ENCODE measurements at regions of chr4 and their contacts with region 1.

Region 1: GRCh38 chr4:101169044-101170014 is 178.0 kb downstream of the PPP3CA start:
- DNase-seq: peak in 3 of 4 experiments; percentile 5 to 38 (median 7)
- ATAC-seq: 0 out of 3 replicates have a peak, but pooled peaks have one; percentile 47
- H3K4me3 ChIP-seq: no peak overlapping the region
- H3K27ac ChIP-seq: no peak overlapping the region
- H3K4me1 ChIP-seq: no peaks in the 10 kb centered on the region
- H3K27me3 ChIP-seq: no peaks in the 10 kb centered on the region
- CTCF ChIP-seq: peak; percentile 8 to 31 (median 29); a peak in 1 of 6 replicates
- EP300 ChIP-seq: no peak
- POLR2A ChIP-seq: no peak
- RAD21 ChIP-seq: peak; percentile 79 to 91

Region 2: GRCh38 chr4:101730291-101731117 is 561.2 kb after region 1 on chr4:
- CTCF ChIA-PET with region 1: interaction called, 3 read pairs
- POLR2A ChIA-PET with region 1: no interaction called
- in situ Hi-C with region 1: no loop called
- intact Hi-C with region 1: loop called (anchors 5 kb)
- DNase-seq: peak; percentile 7 to 37 (median 14)
- ATAC-seq: peak; percentile 72
- H3K4me3 ChIP-seq: no peak overlapping the region
- H3K27ac ChIP-seq: no peak overlapping the region
- H3K4me1 ChIP-seq: no peaks in the 10 kb centered on the region
- H3K27me3 ChIP-seq: no peaks in the 10 kb centered on the region
- CTCF ChIP-seq: peak; percentile 23 to 30 (median 28); a peak in 2 of 6 replicates
- EP300 ChIP-seq: no peak
- POLR2A ChIP-seq: no peak
- RAD21 ChIP-seq: peak; percentile 70 to 78

Region 3: DNA sequence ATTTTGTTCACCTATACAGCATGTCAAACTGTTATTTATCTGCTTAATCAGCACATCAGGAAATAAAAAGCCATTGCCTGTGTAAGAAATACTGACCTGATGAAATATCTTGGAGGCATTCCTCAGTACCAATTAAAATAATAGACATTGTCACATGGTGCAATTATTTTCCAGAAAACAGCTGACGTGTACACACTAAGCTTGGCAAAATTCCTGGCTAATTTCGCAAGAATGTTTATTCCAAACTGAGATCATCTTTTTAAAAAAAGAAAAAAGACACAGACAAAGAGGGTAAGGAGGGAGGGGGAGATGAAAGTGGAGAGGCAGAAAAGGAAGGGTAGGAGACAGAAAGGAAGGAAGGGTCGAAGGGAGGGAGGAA is 1269.9 kb after region 1 on chr4:
- CTCF ChIA-PET with region 1: no interaction called
- POLR2A ChIA-PET with region 1: no interaction called
- in situ Hi-C with region 1: no loop called
- intact Hi-C with region 1: loop called (anchors 10 kb)
- DNase-seq: no peak
- ATAC-seq: no peak
- H3K4me3 ChIP-seq: no peak overlapping the region
- H3K27ac ChIP-seq: no peak overlapping the region; the same call in 2 of the 3 replicates
- H3K4me1 ChIP-seq: peaks cover 0 to 16% of the 10 kb centered on the region in 2 experiments; a peak in 1 of 5 replicates
- H3K27me3 ChIP-seq: no peaks in the 10 kb centered on the region; a peak in 1 of 5 replicates
- CTCF ChIP-seq: no peak
- EP300 ChIP-seq: no peak
- POLR2A ChIP-seq: no peak
- RAD21 ChIP-seq: no peak